Activated CD4-positive, alpha-beta memory T cell treated with anti-CD3 and anti-CD28 coated beads for 36 hours (primary cell): ENCODE measurements at regions of chr15 and their contacts with region 1.

Region 1: DNA sequence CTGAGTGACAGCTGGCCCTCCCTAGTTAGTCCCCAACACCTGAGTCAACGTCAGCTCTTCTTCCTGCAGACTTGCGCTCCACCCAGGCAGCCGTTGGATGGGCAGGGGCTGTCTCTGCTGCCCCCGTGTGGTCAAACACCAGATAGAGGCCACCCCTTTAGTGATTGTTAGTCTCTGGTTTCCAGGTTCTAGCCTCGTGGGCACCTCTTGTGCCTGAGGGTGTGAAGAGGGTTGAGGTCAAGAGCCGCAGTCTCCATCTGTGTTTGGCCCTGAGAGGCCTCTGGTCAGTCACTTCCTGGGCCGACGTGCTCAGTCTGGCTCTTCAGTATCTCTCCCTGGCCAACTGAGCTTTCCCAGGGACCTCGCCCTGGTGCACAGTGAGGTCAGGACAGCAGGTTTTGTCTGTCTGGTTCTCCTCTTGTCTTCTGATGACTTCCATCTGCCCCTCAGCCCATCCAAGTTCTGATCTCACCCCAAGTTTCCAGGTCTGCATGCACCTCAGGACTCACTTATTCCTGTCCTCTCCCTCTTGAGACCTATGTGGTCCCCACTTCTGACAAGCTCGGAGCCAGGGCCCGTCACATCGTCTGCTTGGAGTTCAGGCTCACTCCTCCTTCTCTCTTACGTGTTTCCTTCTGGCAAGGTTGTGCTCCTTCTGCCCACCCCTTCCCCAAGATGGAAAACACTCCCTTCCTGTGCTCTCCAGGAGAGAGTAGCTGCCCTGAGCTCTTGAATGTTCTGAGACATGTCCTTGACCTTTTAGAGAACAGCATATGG is 20.9 kb downstream of the CD276 start:
- DNase-seq: peak; percentile 77
- H3K4me3 Mint-ChIP-seq: no peak overlapping the region
- H3K27ac Mint-ChIP-seq: no peak overlapping the region
- H3K4me1 Mint-ChIP-seq: peaks cover 1% of the 10 kb centered on the region
- H3K27me3 Mint-ChIP-seq: peaks cover 4% of the 10 kb centered on the region

Region 2: GRCh38 chr15:73560501-73561117 is 144.4 kb before region 1 on chr15:
- CTCF ChIA-PET with region 1: interaction called, 40 read pairs
- POLR2A ChIA-PET with region 1: no interaction called
- intact Hi-C with region 1: loop called (anchors 1 kb)
- DNase-seq: no peak
- H3K4me3 Mint-ChIP-seq: no peak overlapping the region
- H3K27ac Mint-ChIP-seq: no peak overlapping the region
- H3K4me1 Mint-ChIP-seq: no peaks in the 10 kb centered on the region
- H3K27me3 Mint-ChIP-seq: no peaks in the 10 kb centered on the region

Region 3: DNA sequence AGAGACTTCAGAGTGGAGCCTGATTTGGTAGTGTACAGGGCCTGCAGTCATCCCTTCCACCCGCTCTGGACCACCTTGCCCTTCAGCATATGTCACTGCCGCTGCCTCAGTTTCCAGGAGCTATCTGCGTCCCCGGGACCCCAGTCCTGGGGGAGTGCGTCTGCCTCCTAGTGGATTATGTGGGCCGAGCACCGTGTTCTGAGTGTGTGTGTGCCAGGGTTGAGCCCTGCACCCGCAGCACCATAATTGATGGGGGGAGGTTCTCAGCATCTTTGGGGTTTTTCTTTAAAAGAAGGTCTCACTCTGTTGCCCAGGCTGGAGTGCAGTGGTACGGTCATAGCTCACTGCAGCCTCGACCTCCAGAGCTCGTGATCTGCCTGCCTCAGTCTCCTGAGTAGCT is 12.7 kb after region 1 on chr15:
- CTCF ChIA-PET with region 1: interaction called, 21 read pairs
- POLR2A ChIA-PET with region 1: no interaction called
- intact Hi-C with region 1: no loop called
- DNase-seq: no peak
- H3K4me3 Mint-ChIP-seq: no peak overlapping the region
- H3K27ac Mint-ChIP-seq: no peak overlapping the region
- H3K4me1 Mint-ChIP-seq: no peaks in the 10 kb centered on the region
- H3K27me3 Mint-ChIP-seq: peaks cover 13% of the 10 kb centered on the region

Region 4: DNA sequence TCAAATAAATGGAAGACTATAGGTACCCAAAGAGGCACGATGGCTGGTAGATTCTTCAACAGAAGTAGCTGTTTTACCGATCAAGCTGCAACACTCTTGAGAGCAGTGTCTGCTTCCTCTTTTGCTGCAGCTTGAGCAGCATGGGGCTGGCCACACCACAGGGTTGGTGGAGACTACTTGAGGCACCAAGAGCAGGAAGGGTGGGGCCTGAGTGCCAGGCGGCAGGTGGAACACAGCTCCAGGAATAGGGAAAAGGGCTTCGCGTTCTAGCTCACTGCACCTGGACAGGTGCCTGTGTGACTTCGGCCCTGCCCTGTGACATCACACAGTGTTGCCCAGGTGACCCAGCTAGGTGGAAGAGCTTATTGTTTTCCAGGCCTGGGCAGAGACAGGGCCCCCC is 530.9 kb after region 1 on chr15 and contains the start of gene CCDC33:
- CTCF ChIA-PET with region 1: no interaction called
- POLR2A ChIA-PET with region 1: no interaction called
- intact Hi-C with region 1: no loop called
- DNase-seq: no peak
- H3K4me3 Mint-ChIP-seq: no peak within 1 kb of the TSS
- H3K27ac Mint-ChIP-seq: no peak within 1 kb of the TSS
- H3K4me1 Mint-ChIP-seq: no peaks in the 10 kb centered on the region
- H3K27me3 Mint-ChIP-seq: peaks cover 3% of the 10 kb centered on the region
- total RNA-seq, gene CCDC33: not detected